AG04450 (cell line): ENCODE measurements at regions of chr3 and their contacts with region 1.

Region 1: DNA sequence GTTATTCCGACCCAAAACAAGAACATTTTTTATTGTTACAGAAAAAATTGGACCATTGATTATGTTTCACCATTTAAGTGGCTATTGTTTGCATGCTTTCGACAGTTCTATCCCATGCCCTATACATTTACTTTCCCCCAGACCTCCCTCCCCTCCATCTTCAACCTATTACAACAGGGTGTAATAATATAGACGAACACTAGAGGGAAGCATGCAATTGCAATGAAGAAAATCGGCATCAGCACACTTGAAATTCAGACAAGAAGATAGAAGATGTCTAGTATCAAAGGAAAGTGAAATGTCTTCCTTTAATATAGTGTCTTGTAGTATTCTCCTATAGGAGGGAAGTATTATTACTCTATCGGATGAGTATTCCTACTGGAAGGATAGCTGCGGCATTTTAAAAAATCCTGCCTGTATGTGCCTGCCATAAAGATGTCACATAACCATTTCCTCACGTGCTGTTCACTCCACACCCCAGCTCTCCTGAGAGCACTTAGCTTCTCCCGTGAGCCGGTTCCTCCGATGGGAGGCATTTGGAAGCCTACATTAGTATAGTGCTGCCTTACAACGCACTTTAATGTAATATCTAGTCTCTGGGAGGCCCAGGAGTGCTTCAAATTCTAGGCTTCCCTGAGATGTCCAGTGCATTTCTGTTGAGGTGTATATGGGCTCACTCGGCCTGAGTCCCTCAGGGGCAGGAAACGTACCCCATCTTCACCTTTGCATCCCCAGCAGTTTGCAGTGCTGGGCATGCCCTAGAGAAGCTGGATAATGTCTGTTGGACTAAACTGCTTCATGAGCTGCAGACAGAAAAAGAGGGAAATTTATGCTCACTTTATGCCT is 17.8 kb upstream of the ERICH6 start:
- DNase-seq: peak; percentile 36
- H3K4me3 ChIP-seq: no peak overlapping the region
- H3K27ac ChIP-seq: no peak overlapping the region
- H3K27me3 ChIP-seq: peaks cover 2% of the 10 kb centered on the region
- CTCF ChIP-seq: peak; percentile 81

Region 2: GRCh38 chr3:150710097-150710496 is 11.4 kb before region 1 on chr3:
- CTCF ChIA-PET with region 1: interaction called, 11 read pairs
- POLR2A ChIA-PET with region 1: no interaction called
- DNase-seq: no peak
- H3K4me3 ChIP-seq: no peak overlapping the region
- H3K27ac ChIP-seq: no peak overlapping the region
- H3K27me3 ChIP-seq: no peaks in the 10 kb centered on the region
- CTCF ChIP-seq: no peak

Region 3: DNA sequence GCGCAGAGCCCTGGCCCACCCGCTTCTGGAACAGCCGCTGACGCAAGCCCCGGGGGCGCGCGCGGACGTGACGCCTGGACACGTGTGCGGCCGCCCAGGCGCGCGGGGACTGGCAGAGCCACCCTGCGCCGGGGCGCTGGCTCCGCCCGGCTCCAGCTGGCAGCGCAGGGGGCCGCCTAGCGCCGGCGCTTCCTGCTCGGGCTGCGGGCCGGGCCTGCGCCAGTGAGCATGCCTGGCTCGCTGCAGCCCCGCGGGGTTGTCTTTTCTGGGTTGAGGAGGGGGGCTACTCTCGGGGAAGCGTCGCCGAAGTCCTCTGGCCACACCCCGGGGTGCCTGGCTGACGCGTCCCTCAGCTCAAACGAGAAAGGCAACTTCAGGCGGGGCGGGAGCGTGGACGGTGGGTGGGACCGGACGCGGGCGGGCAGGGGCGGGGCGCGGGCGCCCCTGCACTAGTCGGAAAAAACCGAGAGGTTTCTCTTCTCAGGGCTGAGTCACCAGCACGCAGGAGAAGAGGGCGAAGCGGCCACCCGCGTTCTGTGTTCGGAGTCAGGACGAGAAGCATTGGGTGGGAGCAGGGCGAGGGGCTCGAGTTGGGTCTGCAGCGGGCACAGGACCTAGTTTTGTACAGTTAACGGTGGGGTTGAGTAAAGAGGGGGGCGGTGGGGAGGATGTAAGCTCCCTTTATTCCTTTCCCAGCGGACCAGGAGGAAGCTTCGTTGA is 41.8 kb after region 1 on chr3 and contains the start of gene SIAH2:
- CTCF ChIA-PET with region 1: interaction called, 17 read pairs
- POLR2A ChIA-PET with region 1: no interaction called
- DNase-seq: peak; percentile 85
- H3K4me3 ChIP-seq: peak within 1 kb of the TSS; percentile 95
- H3K27ac ChIP-seq: peak within 1 kb of the TSS; percentile 97
- H3K27me3 ChIP-seq: no peaks in the 10 kb centered on the region
- CTCF ChIP-seq: no peak
- polyA plus RNA-seq, gene SIAH2: 31.1 and 36.2 TPM in 2 replicates

Region 4: DNA sequence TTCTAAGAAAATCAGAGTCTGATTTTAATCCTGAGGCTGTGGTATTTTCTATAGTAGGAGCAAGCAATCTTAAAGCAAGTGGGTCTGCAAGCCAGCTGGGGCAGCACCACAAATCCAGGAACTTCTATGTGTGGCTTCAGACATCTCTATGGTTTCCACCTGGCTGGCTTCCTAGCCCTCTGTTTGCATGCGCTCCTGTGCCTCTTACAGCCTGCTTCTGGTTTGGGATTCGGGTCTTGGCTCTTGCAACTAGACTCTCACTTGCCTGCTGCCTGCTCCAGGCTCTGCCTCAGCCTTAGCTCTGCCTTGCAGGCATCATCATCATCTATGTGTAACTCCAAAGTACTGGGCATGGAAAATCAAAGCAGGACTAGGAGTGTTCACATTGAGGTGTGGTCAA is 140.3 kb after region 1 on chr3:
- CTCF ChIA-PET with region 1: interaction called, 50 read pairs
- POLR2A ChIA-PET with region 1: no interaction called
- DNase-seq: no peak
- H3K4me3 ChIP-seq: no peak overlapping the region
- H3K27ac ChIP-seq: no peak overlapping the region
- H3K27me3 ChIP-seq: peaks cover 7% of the 10 kb centered on the region
- CTCF ChIP-seq: no peak

Region 5: DNA sequence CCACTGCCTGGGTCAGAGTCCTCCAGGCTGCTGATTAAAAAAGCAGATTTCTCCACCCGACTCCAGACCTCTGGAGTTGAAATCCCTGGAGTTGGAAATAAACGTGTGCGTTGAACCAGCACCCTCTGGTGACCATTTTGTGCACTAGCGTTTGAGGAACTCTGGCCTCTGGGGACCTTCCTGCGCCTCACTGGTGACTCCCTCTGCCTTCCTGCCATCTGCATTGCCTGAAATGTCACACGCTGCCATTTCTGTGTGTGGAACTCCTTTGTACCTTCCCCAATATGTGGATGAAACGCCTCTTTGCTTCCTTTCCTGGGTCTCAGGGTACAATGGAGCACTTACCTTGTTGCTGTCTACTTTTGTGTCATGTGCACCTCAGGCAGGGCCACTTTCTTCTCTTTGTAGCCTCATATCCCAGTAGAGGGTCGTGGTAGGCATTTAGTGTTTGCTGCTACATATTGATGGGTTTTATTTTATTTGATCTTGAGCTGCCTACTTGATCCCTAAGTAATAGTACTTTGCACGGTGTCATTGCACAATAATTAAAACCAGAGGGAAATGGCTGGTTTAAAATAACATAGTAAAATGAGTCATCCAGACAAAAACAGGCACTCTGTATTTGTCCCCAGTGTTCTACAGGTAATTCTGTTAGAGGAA is 424.7 kb after region 1 on chr3:
- CTCF ChIA-PET with region 1: interaction called, 16 read pairs
- POLR2A ChIA-PET with region 1: no interaction called
- DNase-seq: peak; percentile 36
- H3K4me3 ChIP-seq: no peak overlapping the region
- H3K27ac ChIP-seq: no peak overlapping the region
- H3K27me3 ChIP-seq: peaks cover 5% of the 10 kb centered on the region
- CTCF ChIP-seq: peak; percentile 94